ENCODE measurements at regions of chr13 and their contacts with region 1.

Region 1: DNA sequence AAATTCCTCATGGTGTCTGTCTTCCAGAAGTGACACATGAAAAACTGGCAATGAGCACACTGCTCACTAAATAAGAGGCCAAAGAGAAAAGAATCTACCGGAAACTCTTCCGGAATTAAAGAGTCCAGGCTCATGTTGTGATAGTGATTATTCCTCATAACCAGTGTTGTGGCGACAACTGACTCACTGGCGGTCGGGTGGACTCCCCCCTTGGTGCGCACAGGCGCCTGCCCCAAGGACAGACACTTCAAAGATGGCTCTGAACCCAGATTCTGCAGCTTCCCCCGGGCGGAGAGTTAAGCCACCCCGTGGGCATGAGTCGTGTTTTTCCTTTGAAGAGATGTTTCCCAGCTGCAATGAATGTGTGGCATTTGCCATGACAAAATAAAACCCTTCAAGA is 10.3 kb downstream of the IL17D start:
- DNase-seq: peak; percentile 59 to 75
- ATAC-seq: peak; percentile 16 to 33 (median 23)
- H3K4me3 ChIP-seq: peak overlapping the region; percentile 65
- H3K27ac ChIP-seq: peak overlapping the region; percentile 91
- H3K4me1 ChIP-seq: no peaks in the 10 kb centered on the region
- H3K27me3 ChIP-seq: no peaks in the 10 kb centered on the region
- CTCF ChIP-seq: no peak

Region 2: DNA sequence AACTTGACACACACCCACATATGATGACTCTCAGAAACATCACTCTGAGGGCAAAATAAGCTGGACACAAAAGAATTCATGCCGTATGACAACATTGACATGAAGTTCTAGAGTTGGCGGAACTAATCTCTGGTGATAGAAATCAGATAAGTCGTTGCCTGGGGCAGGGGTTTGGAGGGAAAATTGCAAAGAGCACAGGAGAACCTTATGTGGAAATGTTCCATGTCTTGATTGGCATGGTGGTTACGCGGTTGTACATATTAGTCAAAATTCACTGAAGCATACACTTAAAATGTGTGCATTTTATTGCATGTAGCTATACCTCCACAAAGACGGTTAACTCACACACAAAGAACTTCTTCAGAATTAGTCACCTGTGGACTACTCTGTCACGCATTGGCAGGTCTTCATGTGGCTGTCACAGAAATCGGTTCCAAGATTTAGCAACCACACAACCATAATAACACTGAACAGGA is 343.8 kb before region 1 on chr13:
- intact Hi-C with region 1: no loop called
- DNase-seq: no peak
- ATAC-seq: no peak
- H3K4me3 ChIP-seq: no peak overlapping the region
- H3K27ac ChIP-seq: no peak overlapping the region
- H3K4me1 ChIP-seq: no peaks in the 10 kb centered on the region
- H3K27me3 ChIP-seq: peaks cover 0 to 8% (median 0%) of the 10 kb centered on the region in 3 donors
- CTCF ChIP-seq: no peak

Region 3: DNA sequence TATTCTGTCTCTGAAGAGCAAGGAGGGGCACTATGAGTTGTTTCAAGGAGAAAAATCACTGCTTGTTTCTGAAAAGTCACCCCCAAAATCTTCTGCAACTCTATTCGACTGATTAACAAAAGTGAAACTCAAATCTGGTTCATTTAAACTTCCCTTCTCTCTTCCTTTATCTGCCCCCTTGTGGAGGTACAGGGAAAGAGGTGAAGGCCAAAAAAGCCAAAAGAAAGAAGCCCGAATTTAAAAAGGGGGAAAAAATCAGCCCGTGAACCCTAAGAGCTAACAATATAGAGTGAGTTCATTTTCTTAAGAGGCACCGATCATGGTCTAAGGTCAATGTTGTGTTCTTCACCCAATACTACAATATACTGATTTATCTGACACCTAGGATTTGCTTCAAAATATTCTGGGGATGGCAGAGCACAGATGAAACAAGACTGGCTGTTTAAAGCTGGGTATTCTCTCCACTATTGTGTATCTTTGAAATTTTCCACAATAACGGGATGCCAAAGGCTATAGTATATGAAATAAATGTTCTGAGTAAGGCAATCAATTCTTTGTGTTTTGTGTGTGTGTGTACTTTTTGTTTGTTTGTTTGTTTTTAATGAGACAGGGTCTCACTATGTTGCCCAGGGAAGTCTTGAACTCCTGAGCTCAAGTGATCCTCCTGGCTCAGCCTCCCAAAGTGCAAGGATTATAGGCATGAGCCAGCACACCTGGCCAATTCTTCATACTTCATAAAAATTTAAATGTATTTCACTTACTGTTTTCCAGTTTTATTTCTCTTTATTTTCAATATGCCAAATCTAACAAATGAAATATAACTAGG is 115.0 kb after region 1 on chr13:
- intact Hi-C with region 1: loop called (anchors 2 to 5 kb)
- DNase-seq: no peak
- ATAC-seq: peak in 2 of 4 donors; percentile 35 to 50
- H3K4me3 ChIP-seq: peak overlapping the region; percentile 59
- H3K27ac ChIP-seq: peak overlapping the region; percentile 89
- H3K4me1 ChIP-seq: peaks cover 24% of the 10 kb centered on the region
- H3K27me3 ChIP-seq: no peaks in the 10 kb centered on the region
- CTCF ChIP-seq: peak; percentile 84

Region 4: DNA sequence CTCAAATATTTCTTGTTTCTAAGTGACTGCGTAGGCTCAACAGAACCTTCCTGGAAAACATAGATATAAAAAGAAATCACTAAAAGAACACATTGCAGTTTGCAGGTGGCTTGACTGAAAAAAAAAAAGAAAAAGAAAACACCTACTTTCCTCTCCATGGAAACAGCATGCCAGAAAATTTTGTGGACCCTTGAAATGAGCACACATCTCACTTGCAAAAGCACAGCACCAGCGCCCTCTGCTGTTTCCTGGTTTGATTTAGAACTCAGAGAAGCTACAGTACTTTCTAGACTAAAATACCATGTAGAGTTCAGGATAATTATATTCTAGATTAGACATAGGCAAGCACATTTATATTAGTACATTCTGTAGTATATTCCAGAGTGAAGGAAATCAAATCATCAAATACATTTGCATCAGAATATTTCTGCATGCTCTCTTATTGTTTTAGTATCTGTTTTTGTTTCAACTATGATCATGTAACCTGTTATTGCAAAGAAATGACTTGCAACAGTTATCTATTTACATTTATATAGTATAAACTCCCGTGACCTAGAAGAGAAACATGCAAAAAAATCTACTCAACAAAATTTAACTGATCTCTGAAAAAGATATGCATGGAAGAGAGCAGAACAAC is 211.1 kb after region 1 on chr13:
- intact Hi-C with region 1: loop called (anchors 2 kb)
- DNase-seq: peak; percentile 65 to 79
- ATAC-seq: peak; percentile 55 to 83 (median 68)
- H3K4me3 ChIP-seq: no peak overlapping the region
- H3K27ac ChIP-seq: no peak overlapping the region
- H3K4me1 ChIP-seq: no peaks in the 10 kb centered on the region
- H3K27me3 ChIP-seq: no peaks in the 10 kb centered on the region
- CTCF ChIP-seq: peak; percentile 82